CD4-positive, alpha-beta memory T cell (primary cell): ENCODE measurements at regions of chr7 and their contacts with region 1.

Region 1: GRCh38 chr7:86991771-86992191 is 67.7 kb downstream of the ELAPOR2 start:
- DNase-seq: no peak
- H3K4me3 ChIP-seq: no peak overlapping the region
- H3K4me3 Mint-ChIP-seq: no peak overlapping the region
- H3K27ac ChIP-seq: no peak overlapping the region
- H3K27ac Mint-ChIP-seq: peak overlapping the region in 1 of 7 donors; percentile 81
- H3K4me1 ChIP-seq: peaks cover 4% of the 10 kb centered on the region
- H3K4me1 Mint-ChIP-seq: peaks cover 3 to 16% (median 10%) of the 10 kb centered on the region in 4 donors
- H3K27me3 ChIP-seq: no peaks in the 10 kb centered on the region
- H3K27me3 Mint-ChIP-seq: peaks cover 4 to 6% of the 10 kb centered on the region in 2 donors

Region 2: DNA sequence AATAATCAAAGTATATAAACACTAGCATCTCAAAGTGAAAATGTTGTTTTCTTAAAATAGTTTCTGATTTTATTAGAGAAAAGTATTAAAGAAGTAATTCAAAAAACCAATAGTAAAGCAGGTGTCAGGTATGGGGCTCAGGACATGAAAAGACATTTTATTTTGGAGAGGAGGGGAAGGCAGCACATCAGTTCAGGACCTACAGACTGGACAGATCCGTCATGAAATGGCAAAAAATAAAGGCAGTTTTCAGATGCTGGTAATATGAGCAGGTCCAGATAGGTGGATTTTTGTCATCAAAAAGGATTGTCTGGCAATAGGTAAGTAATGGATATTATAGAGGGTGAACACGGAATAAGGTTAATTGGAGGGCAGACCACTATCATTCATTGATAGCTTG is 299.0 kb before region 1 on chr7:
- CTCF ChIA-PET with region 1: no interaction called
- POLR2A ChIA-PET with region 1: no interaction called
- intact Hi-C with region 1: no loop called
- DNase-seq: no peak
- H3K4me3 ChIP-seq: no peak overlapping the region
- H3K4me3 Mint-ChIP-seq: no peak overlapping the region
- H3K27ac ChIP-seq: no peak overlapping the region
- H3K27ac Mint-ChIP-seq: no peak overlapping the region
- H3K4me1 ChIP-seq: no peaks in the 10 kb centered on the region
- H3K4me1 Mint-ChIP-seq: no peaks in the 10 kb centered on the region
- H3K27me3 ChIP-seq: no peaks in the 10 kb centered on the region
- H3K27me3 Mint-ChIP-seq: no peaks in the 10 kb centered on the region

Region 3: DNA sequence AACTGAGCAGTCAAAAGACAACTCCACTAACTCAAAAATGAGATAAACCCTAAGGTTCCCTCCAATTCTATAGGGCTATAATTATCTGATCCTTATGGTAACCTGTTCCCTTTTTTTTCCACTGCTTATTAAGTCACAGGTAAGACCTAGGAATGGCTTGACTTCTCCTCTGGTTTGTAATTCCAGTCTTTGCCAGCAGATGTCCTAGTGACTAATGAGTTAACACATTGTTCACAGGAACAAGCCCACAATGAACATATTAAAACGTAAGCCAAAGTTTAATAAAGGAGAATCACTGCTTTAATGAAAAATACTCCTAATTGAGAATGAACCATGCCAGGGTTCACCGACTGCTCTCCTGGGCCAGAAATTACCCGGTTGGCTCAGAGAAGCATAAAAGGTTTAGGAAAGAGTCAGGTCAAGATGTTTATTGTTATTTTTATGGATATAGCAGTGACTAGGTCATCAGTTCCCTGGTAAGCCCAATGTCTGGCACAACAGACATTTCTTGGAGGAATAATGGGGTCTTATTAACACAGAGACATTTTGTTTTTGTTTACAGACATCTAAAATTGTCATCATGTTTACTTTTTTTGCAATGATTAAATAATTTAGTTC is 52.5 kb before region 1 on chr7:
- CTCF ChIA-PET with region 1: interaction called, 3 read pairs
- POLR2A ChIA-PET with region 1: no interaction called
- intact Hi-C with region 1: loop called (anchors 5 kb)
- DNase-seq: peak; percentile 40 to 62 (median 52)
- H3K4me3 ChIP-seq: no peak overlapping the region
- H3K4me3 Mint-ChIP-seq: no peak overlapping the region
- H3K27ac ChIP-seq: no peak overlapping the region
- H3K27ac Mint-ChIP-seq: peak overlapping the region in 2 of 7 donors; percentile 75 to 85
- H3K4me1 ChIP-seq: no peaks in the 10 kb centered on the region
- H3K4me1 Mint-ChIP-seq: peaks cover 0 to 4% (median 3%) of the 10 kb centered on the region in 4 donors
- H3K27me3 ChIP-seq: no peaks in the 10 kb centered on the region
- H3K27me3 Mint-ChIP-seq: peaks cover 0 to 2% of the 10 kb centered on the region in 2 donors